ENCODE measurements at regions of chr2 and their contacts with region 1.

Region 1: DNA sequence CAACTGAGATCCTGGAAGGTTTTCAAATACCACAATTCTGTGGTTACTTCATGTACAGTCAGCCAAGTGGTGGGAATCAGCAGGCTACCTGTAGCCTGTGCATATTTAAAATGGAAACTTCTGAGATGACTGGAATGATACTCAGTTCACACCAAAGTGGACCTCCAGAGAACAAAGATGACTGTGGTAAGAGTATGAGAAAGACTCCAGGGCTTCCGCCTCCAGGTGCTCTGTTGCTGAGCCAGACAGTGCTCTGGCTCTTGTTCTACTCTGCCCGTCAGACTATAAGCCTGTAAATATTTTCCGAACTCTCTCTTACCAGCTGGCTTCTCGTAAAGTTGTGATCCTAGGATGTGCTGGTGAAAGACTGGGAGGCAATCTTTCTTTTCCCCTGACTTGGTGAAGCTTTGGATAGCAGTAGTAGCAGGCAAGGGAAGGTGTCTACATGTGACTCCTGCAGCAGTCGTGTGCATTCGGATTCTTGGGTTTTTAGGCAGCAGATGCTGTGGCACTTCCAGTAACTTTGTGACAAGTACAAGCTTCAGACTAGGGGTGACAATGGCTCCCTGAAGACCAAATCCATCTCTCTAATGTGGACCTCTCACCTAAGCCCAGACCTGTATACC is 23.1 kb downstream of the ST3GAL5 start:
- DNase-seq: no peak
- H3K4me3 Mint-ChIP-seq: no peak overlapping the region
- H3K27ac Mint-ChIP-seq: peak overlapping the region; percentile 35
- H3K4me1 Mint-ChIP-seq: peaks cover 49% of the 10 kb centered on the region
- H3K27me3 Mint-ChIP-seq: no peaks in the 10 kb centered on the region

Region 2: GRCh38 chr2:85852937-85853498 is 12.6 kb before region 1 on chr2:
- intact Hi-C with region 1: loop called (anchors 1 kb)
- DNase-seq: peak; percentile 46
- H3K4me3 Mint-ChIP-seq: peak overlapping the region; percentile 82
- H3K27ac Mint-ChIP-seq: peak overlapping the region; percentile 99
- H3K4me1 Mint-ChIP-seq: peaks cover 58% of the 10 kb centered on the region
- H3K27me3 Mint-ChIP-seq: no peaks in the 10 kb centered on the region